Activated CD4-positive, alpha-beta memory T cell treated with anti-CD3 and anti-CD28 coated beads for 36 hours (primary cell): ENCODE measurements at regions of chr4 and their contacts with region 1.

Region 1: DNA sequence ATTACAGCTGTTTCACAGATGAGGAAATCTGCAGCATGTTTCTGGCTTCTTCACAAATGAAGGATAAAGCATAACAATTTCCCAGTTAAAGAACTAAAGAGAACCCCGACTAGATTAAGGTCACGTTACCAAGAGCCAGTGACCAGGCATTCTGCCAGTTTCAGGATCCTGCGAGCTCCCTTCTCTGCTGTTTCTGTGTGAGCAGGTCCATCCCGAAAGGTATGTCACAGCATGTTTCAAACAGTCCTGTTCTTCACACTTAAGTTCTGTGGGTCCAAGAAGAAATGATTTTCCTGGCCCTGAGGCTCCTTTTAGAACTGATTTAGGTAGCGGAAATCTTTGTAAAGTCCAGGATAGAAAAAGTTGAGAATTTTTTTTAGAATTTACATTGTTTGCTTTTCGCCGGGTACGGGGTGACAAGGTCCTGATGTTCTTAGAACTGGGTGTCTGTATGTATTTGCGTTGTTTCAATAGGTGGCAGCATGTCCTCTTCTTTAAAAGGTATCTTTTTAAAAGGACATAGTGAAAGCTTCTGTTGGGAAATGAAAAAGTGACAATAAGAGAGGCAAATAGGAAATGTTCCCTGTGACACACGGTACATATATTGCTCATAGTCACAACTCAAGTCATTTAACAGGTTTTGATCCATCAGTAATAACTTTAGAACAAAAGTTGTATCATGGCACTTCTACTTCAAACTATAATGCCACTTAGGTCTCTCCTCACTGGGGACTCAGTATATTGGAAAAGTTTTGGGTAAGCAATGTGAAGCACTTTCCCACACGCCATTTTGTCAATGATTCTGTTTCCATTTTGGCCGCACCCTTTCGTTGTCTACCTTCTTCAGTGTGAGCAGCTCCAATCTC is 18.4 kb downstream of the IL21 start:
- DNase-seq: no peak
- H3K4me3 Mint-ChIP-seq: peak overlapping the region; percentile 11
- H3K27ac Mint-ChIP-seq: peak overlapping the region; percentile 38
- H3K4me1 Mint-ChIP-seq: peaks cover 25% of the 10 kb centered on the region
- H3K27me3 Mint-ChIP-seq: peaks cover 7% of the 10 kb centered on the region

Region 2: DNA sequence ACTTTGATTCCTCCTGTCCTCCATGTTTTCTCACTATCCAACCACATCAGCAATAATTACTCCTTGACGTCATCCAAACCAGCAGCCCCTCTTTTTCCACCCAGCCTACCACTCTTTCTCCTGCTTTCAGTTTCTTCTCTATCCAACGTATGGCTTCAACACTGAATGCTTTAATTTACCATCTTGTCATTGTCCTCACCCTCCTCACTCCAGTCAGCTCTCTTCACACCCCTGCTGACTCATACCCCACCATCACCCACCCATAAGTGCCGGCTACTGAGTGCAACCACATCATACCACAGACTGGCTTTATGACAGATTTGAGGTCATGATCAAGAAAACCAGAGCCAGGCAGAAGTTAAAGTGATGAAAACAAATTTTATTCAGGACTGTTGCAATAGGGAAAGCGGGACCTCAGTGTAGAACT is 895.9 kb before region 1 on chr4:
- CTCF ChIA-PET with region 1: no interaction called
- POLR2A ChIA-PET with region 1: no interaction called
- intact Hi-C with region 1: no loop called
- DNase-seq: peak; percentile 83
- H3K4me3 Mint-ChIP-seq: no peak overlapping the region
- H3K27ac Mint-ChIP-seq: peak overlapping the region; percentile 59
- H3K4me1 Mint-ChIP-seq: peaks cover 38% of the 10 kb centered on the region
- H3K27me3 Mint-ChIP-seq: peaks cover 26% of the 10 kb centered on the region

Region 3: DNA sequence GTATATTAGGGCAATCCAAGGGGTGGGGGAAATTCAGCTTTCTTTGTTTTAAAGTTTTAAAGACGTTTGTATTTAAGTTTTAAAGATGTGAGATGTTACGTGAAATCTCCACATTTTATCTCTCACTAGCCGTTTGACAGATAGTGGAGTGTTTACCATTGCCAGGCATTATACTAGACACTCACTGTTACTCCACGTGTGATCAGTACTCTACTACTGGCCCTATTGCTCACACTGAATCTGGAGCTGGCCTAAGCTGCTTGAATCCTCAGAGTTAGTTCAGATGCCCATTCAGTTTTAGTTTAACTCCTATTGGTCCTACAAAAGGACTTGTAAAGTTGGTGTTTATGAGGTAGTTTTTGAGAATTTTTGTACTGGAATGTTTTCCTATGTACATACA is 219.2 kb before region 1 on chr4:
- CTCF ChIA-PET with region 1: no interaction called
- POLR2A ChIA-PET with region 1: no interaction called
- intact Hi-C with region 1: no loop called
- DNase-seq: no peak
- H3K4me3 Mint-ChIP-seq: no peak overlapping the region
- H3K27ac Mint-ChIP-seq: no peak overlapping the region
- H3K4me1 Mint-ChIP-seq: no peaks in the 10 kb centered on the region
- H3K27me3 Mint-ChIP-seq: no peaks in the 10 kb centered on the region

Region 4: GRCh38 chr4:122584519-122584918 is 18.0 kb before region 1 on chr4:
- CTCF ChIA-PET with region 1: interaction called, 13 read pairs
- POLR2A ChIA-PET with region 1: no interaction called
- intact Hi-C with region 1: loop called (anchors 1 kb)
- DNase-seq: peak; percentile 23
- H3K4me3 Mint-ChIP-seq: peak overlapping the region; percentile 21
- H3K27ac Mint-ChIP-seq: peak overlapping the region; percentile 88
- H3K4me1 Mint-ChIP-seq: peaks cover 46% of the 10 kb centered on the region
- H3K27me3 Mint-ChIP-seq: no peaks in the 10 kb centered on the region

Region 5: GRCh38 chr4:122617597-122618593 is 15.4 kb after region 1 on chr4:
- CTCF ChIA-PET with region 1: interaction called, 6 read pairs
- POLR2A ChIA-PET with region 1: no interaction called
- intact Hi-C with region 1: loop called (anchors 1 kb)
- DNase-seq: no peak
- H3K4me3 Mint-ChIP-seq: peak overlapping the region; percentile 76
- H3K27ac Mint-ChIP-seq: peak overlapping the region; percentile 87
- H3K4me1 Mint-ChIP-seq: peaks cover 70% of the 10 kb centered on the region
- H3K27me3 Mint-ChIP-seq: no peaks in the 10 kb centered on the region

Region 6: DNA sequence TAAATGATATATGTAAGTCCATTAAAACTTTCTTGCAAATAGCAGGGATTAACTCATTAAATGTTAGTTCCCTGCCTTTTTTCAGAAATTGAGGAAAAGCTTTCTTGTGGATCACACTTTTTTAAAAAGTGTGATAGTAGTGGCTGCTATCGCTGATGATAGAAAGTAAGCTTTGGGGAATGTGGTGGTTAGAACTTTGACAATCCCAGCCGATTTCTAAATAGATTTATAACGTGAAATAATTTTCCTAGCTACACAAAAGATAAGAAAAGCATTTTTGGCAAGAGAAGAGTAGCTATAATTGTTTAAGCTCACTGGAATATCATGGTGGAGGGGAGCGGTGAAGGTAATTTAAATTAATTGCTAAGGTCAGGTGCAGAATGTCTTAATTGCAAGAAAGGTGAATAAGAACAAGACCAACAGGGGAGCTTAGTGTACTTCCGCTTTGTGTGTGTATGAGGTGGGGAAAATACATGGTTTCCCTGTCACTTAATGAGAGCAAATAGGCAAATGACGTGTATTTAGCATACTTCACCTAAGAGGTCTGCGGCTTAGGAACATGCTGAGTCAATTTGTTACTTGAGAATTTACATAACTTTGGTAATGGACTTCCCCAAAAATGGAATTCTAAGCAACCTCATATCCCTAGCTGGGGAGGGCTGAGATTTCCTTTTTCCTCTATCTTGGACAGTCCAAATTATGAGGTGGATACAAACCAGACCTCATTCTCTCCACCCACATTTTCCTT is 30.1 kb after region 1 on chr4:
- CTCF ChIA-PET with region 1: interaction called, 5 read pairs
- POLR2A ChIA-PET with region 1: interaction called, 3 read pairs
- intact Hi-C with region 1: loop called (anchors 2 kb)
- DNase-seq: no peak
- H3K4me3 Mint-ChIP-seq: peak overlapping the region; percentile 21
- H3K27ac Mint-ChIP-seq: peak overlapping the region; percentile 55
- H3K4me1 Mint-ChIP-seq: peaks cover 62% of the 10 kb centered on the region
- H3K27me3 Mint-ChIP-seq: no peaks in the 10 kb centered on the region

Region 7: GRCh38 chr4:122679317-122679716 is 76.8 kb after region 1 on chr4:
- CTCF ChIA-PET with region 1: no interaction called
- POLR2A ChIA-PET with region 1: no interaction called
- intact Hi-C with region 1: no loop called
- DNase-seq: no peak
- H3K4me3 Mint-ChIP-seq: no peak overlapping the region
- H3K27ac Mint-ChIP-seq: no peak overlapping the region
- H3K4me1 Mint-ChIP-seq: peaks cover 7% of the 10 kb centered on the region
- H3K27me3 Mint-ChIP-seq: peaks cover 7% of the 10 kb centered on the region

Region 8: DNA sequence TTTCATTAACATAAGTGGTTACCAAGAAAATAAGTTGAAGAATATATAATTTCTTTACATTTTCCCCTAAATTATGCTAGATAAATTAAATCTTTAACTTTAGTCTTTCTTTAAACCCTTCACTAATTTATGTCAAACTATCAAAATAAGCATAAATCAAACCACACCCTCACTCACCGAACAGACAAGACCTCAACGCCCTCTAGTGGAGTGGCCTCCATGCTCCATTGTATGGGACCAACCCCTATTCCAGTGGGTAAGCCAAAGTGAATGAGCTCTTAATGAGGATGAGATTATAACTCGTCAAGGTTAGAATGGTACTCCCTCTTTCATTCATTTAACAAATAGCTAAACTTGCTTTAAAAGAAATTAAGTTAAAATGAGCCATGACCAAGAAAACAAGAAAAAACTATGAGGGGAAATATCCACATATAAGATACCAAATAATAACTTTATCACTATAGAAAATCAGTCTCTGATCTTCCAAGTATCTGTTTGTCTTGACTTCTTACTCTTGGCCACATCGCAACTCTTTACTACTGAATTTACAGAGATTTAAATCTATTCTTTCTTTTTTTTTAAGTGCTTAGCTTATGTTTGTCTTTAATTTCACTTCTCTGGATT is 114.4 kb after region 1 on chr4:
- CTCF ChIA-PET with region 1: interaction called, 45 read pairs
- POLR2A ChIA-PET with region 1: no interaction called
- intact Hi-C with region 1: loop called (anchors 1 kb)
- DNase-seq: peak; percentile 85
- H3K4me3 Mint-ChIP-seq: peak overlapping the region; percentile 37
- H3K27ac Mint-ChIP-seq: peak overlapping the region; percentile 23
- H3K4me1 Mint-ChIP-seq: peaks cover 36% of the 10 kb centered on the region
- H3K27me3 Mint-ChIP-seq: peaks cover 2% of the 10 kb centered on the region

Region 9: DNA sequence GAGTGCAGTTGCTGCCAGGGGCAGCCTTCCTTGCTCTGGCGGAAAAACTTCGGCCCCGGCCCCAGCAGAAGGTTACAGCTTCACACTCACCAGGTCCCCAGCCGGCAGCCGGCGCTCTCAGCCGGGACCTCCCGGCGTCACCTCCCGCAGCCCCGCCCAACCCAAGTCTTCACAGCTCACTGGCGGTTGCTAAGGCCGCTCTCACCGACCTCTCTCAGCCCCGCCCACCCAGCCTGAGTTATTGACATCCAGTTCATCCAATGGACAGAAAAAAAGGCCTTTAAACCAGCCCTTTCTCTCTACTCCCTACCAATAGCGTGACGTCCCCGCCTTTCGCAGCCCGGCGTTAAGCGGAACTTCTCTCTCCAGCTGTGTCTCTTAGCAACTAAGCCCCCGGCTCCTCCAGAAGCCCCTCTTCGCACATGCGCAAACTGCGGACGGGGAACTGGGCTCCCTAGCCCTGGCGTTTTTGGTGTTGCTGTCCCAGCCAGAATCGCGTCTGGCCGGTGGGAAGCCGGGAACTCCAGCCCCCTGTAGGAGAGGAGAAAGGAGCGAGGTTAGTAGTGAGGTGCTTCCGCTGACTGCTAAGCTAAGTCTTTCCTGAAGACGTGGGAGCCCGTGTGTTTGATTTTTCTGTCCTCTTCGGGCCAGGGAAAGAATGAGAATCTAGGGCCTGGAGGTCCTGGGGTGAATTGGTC is 130.0 kb after region 1 on chr4 and contains the start of gene BBS12:
- CTCF ChIA-PET with region 1: interaction called, 15 read pairs
- POLR2A ChIA-PET with region 1: no interaction called
- intact Hi-C with region 1: loop called (anchors 1 kb)
- DNase-seq: peak; percentile 100
- H3K4me3 Mint-ChIP-seq: peak within 1 kb of the TSS; percentile 87
- H3K27ac Mint-ChIP-seq: peak within 1 kb of the TSS; percentile 87
- H3K4me1 Mint-ChIP-seq: peaks cover 27% of the 10 kb centered on the region
- H3K27me3 Mint-ChIP-seq: no peaks in the 10 kb centered on the region
- total RNA-seq, gene BBS12: 3.7 to 4.3 TPM

Region 10: DNA sequence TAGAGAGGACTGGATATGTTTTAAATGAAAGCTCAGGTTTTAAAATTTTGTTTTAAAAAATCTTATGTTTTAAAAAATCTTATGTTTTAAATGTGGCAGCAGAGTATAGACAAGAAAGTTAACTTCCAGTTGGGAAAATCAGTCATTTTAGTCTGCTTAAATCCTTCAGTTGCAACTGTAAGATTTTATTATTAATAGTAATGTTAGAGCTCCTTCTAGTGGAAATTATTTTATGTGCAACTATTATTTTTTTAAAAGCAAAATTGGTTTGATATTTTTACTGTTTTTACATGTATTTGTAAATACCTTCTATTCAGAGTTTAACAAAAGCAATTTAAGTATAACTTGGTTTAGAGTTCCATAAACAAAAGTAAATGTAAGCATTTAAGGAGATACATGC is 328.4 kb after region 1 on chr4:
- CTCF ChIA-PET with region 1: interaction called, 21 read pairs
- POLR2A ChIA-PET with region 1: no interaction called
- intact Hi-C with region 1: no loop called
- DNase-seq: no peak
- H3K4me3 Mint-ChIP-seq: no peak overlapping the region
- H3K27ac Mint-ChIP-seq: no peak overlapping the region
- H3K4me1 Mint-ChIP-seq: peaks cover 6% of the 10 kb centered on the region
- H3K27me3 Mint-ChIP-seq: no peaks in the 10 kb centered on the region

Region 11: DNA sequence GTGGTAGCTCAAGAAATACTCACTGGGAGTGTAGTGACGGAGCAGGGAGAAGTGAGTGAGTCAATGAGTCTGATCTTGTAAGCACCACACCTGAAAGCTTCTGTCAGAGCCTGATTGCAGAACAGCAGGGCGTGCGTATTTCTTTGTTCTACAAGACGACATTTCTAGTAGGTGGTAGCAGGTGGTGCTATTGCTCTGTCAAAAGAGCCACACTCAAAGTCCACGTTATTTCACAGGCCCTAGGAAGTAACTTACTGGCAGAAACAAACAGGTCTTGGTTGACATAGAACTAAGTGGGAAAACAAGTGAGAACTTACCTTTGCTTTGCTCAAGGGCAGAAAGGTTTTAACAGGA is 747.7 kb after region 1 on chr4:
- CTCF ChIA-PET with region 1: no interaction called
- POLR2A ChIA-PET with region 1: no interaction called
- intact Hi-C with region 1: no loop called
- DNase-seq: no peak
- H3K4me3 Mint-ChIP-seq: no peak overlapping the region
- H3K27ac Mint-ChIP-seq: no peak overlapping the region
- H3K4me1 Mint-ChIP-seq: no peaks in the 10 kb centered on the region
- H3K27me3 Mint-ChIP-seq: peaks cover 11% of the 10 kb centered on the region